Posterior vena cava (tissue), 2 donors: ENCODE measurements at regions of chr17 and their contacts with region 1.

Region 1: DNA sequence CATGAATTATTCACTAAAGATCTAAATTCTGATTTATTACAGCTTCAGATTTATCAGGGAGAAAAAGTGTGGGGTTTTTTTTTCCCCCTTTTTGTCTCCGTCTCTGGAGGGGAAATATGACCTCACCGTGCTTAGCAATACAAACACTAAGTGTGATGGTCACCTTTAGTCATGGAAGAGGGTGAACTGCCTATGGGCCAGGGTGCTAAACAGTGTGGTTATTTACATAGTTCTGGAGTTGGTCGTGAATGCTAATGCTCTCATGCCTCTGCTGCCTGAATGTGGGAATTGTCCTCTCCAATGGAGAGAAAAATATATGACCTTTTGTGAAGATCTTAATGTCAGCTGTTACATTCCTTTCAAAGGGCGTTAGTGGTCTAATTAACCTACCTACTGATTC is 44.8 kb upstream of the MSI2 start:
- DNase-seq: no peak

Region 2: DNA sequence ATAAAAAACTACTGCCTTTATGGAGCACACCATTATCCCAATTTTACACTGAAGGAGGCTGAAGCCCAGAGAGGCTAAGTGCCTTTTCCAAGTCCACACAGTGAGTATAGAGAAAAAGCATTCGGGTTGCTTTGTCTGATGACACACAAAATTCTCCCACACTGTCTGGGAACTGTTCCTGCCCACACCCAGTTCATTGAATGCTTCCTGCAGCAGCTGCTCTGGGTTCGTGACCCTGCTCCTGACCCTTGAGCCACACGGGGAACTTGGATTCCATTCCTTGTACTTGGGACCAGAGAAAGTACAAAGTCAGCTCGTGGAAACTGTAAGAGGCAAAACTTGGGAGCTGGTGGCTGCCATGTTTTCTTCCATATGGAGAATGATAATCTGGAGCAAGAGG is 68.6 kb before region 1 on chr17:
- intact Hi-C with region 1: no loop called
- DNase-seq: no peak

Region 3: GRCh38 chr17:57255776-57256681 is 44.5 kb after region 1 on chr17 and contains the start of gene MSI2:
- intact Hi-C with region 1: loop called in 1 of 2 experiments (anchors 2 kb)
- DNase-seq: peak; percentile 97
- total RNA-seq, gene MSI2: 23.2 to 30.9 TPM